Astrocyte of the cerebellum (primary cell): ENCODE measurements at regions of chr17 and their contacts with region 1.

Region 1: GRCh38 chr17:79242873-79243602 is 168.4 kb downstream of the ENGASE start:
- DNase-seq: no peak
- H3K4me3 ChIP-seq: no peak overlapping the region
- CTCF ChIP-seq: no peak

Region 2: GRCh38 chr17:79137015-79137788 is 105.8 kb before region 1 on chr17:
- in situ Hi-C with region 1: no loop called
- DNase-seq: no peak
- H3K4me3 ChIP-seq: no peak overlapping the region
- CTCF ChIP-seq: no peak

Region 3: DNA sequence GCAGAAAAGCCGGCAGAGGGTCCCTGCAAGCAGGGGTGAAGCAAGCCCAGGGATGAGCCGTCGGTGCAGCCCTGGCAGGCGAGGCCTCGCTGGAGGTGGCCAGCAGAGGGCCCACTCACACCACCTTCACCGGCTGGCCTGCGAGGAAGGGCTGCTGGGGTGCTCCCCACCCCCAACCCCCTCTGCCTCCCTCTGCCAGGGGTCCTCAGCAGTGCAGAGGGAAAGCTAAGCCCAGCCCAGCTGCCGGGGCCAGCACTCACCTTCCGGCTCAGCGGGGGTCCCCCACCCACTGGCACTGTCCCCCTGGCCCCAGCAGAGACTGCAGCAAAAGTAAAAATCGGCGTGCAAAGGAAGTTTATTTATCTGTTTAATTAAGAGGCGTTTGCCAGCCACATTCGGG is 55.0 kb before region 1 on chr17:
- in situ Hi-C with region 1: loop called (anchors 5 kb)
- DNase-seq: no peak
- H3K4me3 ChIP-seq: no peak overlapping the region
- CTCF ChIP-seq: peak; percentile 28

Region 4: GRCh38 chr17:79304884-79305283 is 61.8 kb after region 1 on chr17:
- in situ Hi-C with region 1: loop called (anchors 5 kb)
- DNase-seq: no peak
- H3K4me3 ChIP-seq: no peak overlapping the region
- CTCF ChIP-seq: no peak